Heart left ventricle (tissue), 16 donors: ENCODE measurements at regions of chr2 and their contacts with region 1.

Region 1: GRCh38 chr2:101697124-101698013 is at the start of gene MAP4K4:
- DNase-seq: peak; percentile 89 to 93 (median 90)
- ATAC-seq: peak; percentile 85 to 91 (median 86)
- H3K4me3 ChIP-seq: peak within 1 kb of the TSS; percentile 62 to 88 (median 72)
- H3K27ac ChIP-seq: peak within 1 kb of the TSS; percentile 64 to 95 (median 92)
- H3K4me1 ChIP-seq: peaks cover 0 to 42% (median 25%) of the 10 kb centered on the region in 12 donors
- H3K27me3 ChIP-seq: no peaks in the 10 kb centered on the region
- CTCF ChIP-seq: peak in 11 of 12 donors; percentile 15 to 63 (median 38)
- POLR2A ChIP-seq: peak in 1 of 2 donors; percentile 54
- total RNA-seq, gene MAP4K4: 65.3 to 146 (median 114) TPM

Region 2: DNA sequence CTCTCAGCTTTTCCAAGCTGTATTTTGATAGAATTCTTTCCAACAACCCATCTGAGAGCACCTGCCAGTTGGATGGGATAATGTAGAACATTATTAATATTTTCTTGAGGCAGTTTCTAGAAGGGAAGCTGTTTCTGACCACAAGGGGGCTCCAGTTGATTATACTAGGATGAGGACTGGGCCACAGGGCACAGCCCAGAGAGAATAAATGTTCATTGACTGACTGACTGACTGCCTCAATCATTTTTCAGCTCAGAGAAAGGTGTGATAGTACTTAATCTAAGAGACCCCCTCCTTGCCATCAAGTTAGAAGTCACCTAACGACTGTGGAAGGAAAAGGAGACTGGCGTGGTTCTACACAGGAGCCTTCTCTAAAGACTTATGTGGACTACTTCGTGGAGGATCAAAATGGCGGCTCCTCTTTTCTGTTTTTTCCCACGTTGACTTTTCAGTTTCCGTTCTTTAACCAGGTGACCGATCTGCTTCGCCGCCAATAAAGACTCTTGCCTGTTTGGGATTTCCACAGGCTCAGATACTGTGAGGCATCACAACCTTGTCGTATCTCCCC is 278.2 kb before region 1 on chr2:
- intact Hi-C with region 1: loop called in 4 of 10 experiments (anchors 5 to 10 kb)
- DNase-seq: peak in 4 of 5 donors; percentile 47 to 68 (median 62)
- ATAC-seq: peak; percentile 55 to 89 (median 76)
- H3K4me3 ChIP-seq: no peak overlapping the region
- H3K27ac ChIP-seq: no peak overlapping the region
- H3K4me1 ChIP-seq: peaks cover 0 to 4% (median 0%) of the 10 kb centered on the region in 12 donors
- H3K27me3 ChIP-seq: no peaks in the 10 kb centered on the region
- CTCF ChIP-seq: peak; percentile 66 to 90 (median 83)
- POLR2A ChIP-seq: no peak

Region 3: DNA sequence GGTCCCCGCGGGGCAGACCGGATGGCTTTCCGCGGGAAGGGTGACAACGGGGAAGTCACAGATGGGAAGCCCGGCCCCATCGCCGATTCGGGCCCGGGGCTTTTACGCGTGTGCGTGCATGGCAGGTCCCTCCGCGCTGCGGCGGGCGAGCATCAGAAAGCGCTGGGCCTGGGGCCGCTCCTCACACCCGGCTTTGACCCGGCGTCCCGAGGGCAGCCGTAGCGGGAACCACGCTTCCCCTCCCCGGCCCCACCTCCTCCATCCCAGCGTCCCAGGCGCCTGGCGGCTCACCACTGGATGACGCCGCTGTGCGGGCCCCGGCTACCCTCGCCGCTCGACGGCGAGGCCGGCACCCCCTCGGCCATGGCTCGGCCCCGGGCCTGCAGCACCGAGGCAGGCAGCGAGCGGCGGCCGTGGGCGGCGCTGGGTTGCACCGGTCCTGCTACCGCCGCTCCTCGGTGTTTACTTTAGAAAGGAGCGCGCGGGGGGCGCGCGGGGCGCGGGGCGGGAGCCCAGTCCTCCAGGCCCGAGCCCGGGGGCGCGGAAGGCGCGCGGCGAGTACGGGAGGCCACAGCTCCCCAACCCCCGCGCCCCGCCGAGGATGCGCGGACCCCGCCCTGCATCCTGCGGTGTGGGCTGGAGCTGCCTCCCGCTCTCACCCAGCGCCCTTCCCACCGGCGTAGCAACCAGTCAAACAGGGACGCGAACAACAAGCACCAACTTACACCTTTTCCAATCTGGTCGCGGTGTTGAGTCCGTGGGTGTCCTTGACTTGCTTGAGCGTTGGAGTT is 223.3 kb before region 1 on chr2:
- intact Hi-C with region 1: loop called in 1 of 10 experiments (anchors 10 kb)
- DNase-seq: peak; percentile 62 to 85 (median 74)
- ATAC-seq: peak; percentile 71 to 93 (median 90)
- H3K4me3 ChIP-seq: peak overlapping the region; percentile 32 to 87 (median 62)
- H3K27ac ChIP-seq: peak overlapping the region; percentile 52 to 92 (median 78)
- H3K4me1 ChIP-seq: peaks cover 0 to 34% (median 9%) of the 10 kb centered on the region in 12 donors
- H3K27me3 ChIP-seq: peaks cover 0 to 64% (median 0%) of the 10 kb centered on the region in 9 donors
- CTCF ChIP-seq: peak in 2 of 12 donors; percentile 10 to 13
- POLR2A ChIP-seq: no peak

Region 4: GRCh38 chr2:101741775-101742520 is 44.6 kb after region 1 on chr2:
- intact Hi-C with region 1: loop called in 3 of 10 experiments (anchors 5 kb)
- DNase-seq: no peak
- ATAC-seq: peak in 3 of 4 donors; percentile 8 to 32 (median 28)
- H3K4me3 ChIP-seq: no peak overlapping the region
- H3K27ac ChIP-seq: peak overlapping the region in 11 of 12 donors; percentile 33 to 74 (median 62)
- H3K4me1 ChIP-seq: peaks cover 15 to 92% (median 75%) of the 10 kb centered on the region in 12 donors
- H3K27me3 ChIP-seq: no peaks in the 10 kb centered on the region
- CTCF ChIP-seq: no peak
- POLR2A ChIP-seq: no peak

Region 5: GRCh38 chr2:101770726-101771125 is 73.4 kb after region 1 on chr2:
- intact Hi-C with region 1: loop called in 3 of 10 experiments (anchors 5 to 10 kb)
- DNase-seq: no peak
- ATAC-seq: peak; percentile 11 to 44 (median 40)
- H3K4me3 ChIP-seq: no peak overlapping the region
- H3K27ac ChIP-seq: peak overlapping the region in 5 of 12 donors; percentile 2 to 14 (median 4)
- H3K4me1 ChIP-seq: peaks cover 8 to 100% (median 88%) of the 10 kb centered on the region in 12 donors
- H3K27me3 ChIP-seq: no peaks in the 10 kb centered on the region
- CTCF ChIP-seq: peak in 9 of 12 donors; percentile 33 to 55 (median 39)
- POLR2A ChIP-seq: no peak

Region 6: GRCh38 chr2:101831351-101831865 is 134.0 kb after region 1 on chr2:
- intact Hi-C with region 1: loop called in 8 of 10 experiments (anchors 1 to 5 kb)
- DNase-seq: peak in 4 of 5 donors; percentile 72 to 79 (median 76)
- ATAC-seq: peak; percentile 70 to 84 (median 80)
- H3K4me3 ChIP-seq: no peak overlapping the region
- H3K27ac ChIP-seq: peak overlapping the region in 10 of 12 donors; percentile 40 to 76 (median 56)
- H3K4me1 ChIP-seq: peaks cover 9 to 58% (median 53%) of the 10 kb centered on the region in 12 donors
- H3K27me3 ChIP-seq: no peaks in the 10 kb centered on the region
- CTCF ChIP-seq: peak; percentile 64 to 87 (median 78)
- POLR2A ChIP-seq: no peak

Region 7: DNA sequence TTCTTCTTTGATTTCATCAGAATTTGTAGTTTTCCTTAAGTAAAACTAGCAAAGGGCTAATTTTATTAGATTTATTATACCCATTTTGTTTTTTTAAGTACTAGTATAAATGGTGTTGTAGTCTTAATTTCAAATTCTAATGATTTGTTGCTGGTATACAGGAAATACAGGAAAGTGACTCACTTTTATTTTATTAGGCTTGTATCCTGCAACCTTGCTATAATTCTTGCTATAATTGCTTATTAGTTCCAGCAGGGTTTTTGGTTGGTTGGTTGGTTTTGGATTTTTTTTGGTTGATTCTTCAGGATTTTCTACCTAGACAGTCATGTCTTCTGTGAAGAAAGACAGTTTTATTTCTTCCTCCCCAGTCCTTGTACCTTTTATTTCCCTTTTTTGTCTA is 183.8 kb after region 1 on chr2:
- intact Hi-C with region 1: no loop called
- DNase-seq: no peak
- ATAC-seq: no peak
- H3K4me3 ChIP-seq: no peak overlapping the region
- H3K27ac ChIP-seq: no peak overlapping the region
- H3K4me1 ChIP-seq: peaks cover 0 to 35% (median 17%) of the 10 kb centered on the region in 12 donors
- H3K27me3 ChIP-seq: no peaks in the 10 kb centered on the region
- CTCF ChIP-seq: no peak
- POLR2A ChIP-seq: no peak

Region 8: DNA sequence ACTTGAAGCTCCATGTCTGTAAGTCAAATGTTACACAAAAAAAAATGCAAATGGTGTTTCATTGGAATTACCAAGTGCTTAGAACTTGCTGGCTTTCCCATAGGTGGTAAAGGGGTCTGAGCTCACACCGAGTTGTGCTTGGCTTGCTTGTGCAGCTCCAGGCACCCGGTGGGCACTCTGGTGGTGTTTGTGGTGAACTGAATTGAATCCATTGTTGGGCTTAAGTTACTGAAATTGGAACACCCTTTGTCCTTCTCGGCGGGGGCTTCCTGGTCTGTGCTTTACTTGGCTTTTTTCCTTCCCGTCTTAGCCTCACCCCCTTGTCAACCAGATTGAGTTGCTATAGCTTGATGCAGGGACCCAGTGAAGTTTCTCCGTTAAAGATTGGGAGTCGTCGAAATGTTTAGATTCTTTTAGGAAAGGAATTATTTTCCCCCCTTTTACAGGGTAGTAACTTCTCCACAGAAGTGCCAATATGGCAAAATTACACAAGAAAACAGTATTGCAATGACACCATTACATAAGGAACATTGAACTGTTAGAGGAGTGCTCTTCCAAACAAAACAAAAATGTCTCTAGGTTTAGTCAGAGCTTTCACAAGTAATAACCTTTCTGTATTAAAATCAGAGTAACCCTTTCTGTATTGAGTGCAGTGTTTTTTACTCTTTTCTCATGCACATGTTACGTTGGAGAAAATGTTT is 196.5 kb after region 1 on chr2:
- intact Hi-C with region 1: no loop called
- DNase-seq: no peak
- ATAC-seq: no peak
- H3K4me3 ChIP-seq: no peak overlapping the region
- H3K27ac ChIP-seq: no peak overlapping the region
- H3K4me1 ChIP-seq: peaks cover 0 to 13% (median 0%) of the 10 kb centered on the region in 12 donors
- H3K27me3 ChIP-seq: no peaks in the 10 kb centered on the region
- CTCF ChIP-seq: no peak
- POLR2A ChIP-seq: no peak

Region 9: DNA sequence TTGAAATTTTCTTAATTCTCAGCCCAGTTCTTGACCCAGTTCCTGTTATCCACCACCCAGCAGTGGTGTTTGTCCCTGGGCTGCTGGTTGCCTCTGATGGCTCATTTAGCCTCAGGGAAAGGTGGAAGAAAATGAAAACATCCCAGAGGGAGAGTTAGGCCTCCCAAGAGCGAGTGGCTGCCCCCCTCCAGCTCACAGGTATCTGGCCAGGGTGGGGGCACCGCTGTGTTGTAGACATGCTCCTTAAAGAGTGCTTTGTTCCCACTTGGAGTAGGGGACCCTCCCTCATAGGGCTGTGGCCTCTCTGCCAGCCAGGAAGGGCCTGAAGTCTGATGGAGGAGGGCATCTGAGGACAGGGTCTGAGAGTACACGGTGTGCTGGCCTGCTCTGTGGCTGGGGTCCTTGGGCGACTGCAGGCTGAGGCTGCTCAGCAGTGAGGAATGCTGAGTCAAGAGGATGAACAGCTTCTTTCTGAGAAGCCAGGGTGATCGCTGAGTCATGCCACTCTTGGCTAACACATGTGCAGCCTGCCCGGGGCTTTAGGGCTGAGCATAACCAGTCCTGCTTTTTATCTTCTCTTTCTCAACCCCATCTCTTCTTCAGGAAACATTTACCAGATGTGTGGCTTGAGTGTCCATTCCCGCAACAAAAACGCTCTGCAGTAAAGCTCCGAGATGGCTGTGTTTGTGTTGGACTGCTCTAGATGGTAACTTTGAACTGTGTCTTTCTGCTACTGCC is 366.7 kb after region 1 on chr2:
- intact Hi-C with region 1: no loop called
- DNase-seq: peak; percentile 80 to 95 (median 87)
- ATAC-seq: peak; percentile 85 to 94 (median 92)
- H3K4me3 ChIP-seq: peak overlapping the region in 3 of 12 donors; percentile 11 to 12 (median 11)
- H3K27ac ChIP-seq: peak overlapping the region; percentile 77 to 97 (median 90)
- H3K4me1 ChIP-seq: peaks cover 0 to 79% (median 52%) of the 10 kb centered on the region in 12 donors
- H3K27me3 ChIP-seq: no peaks in the 10 kb centered on the region
- CTCF ChIP-seq: no peak
- POLR2A ChIP-seq: no peak

Region 10: DNA sequence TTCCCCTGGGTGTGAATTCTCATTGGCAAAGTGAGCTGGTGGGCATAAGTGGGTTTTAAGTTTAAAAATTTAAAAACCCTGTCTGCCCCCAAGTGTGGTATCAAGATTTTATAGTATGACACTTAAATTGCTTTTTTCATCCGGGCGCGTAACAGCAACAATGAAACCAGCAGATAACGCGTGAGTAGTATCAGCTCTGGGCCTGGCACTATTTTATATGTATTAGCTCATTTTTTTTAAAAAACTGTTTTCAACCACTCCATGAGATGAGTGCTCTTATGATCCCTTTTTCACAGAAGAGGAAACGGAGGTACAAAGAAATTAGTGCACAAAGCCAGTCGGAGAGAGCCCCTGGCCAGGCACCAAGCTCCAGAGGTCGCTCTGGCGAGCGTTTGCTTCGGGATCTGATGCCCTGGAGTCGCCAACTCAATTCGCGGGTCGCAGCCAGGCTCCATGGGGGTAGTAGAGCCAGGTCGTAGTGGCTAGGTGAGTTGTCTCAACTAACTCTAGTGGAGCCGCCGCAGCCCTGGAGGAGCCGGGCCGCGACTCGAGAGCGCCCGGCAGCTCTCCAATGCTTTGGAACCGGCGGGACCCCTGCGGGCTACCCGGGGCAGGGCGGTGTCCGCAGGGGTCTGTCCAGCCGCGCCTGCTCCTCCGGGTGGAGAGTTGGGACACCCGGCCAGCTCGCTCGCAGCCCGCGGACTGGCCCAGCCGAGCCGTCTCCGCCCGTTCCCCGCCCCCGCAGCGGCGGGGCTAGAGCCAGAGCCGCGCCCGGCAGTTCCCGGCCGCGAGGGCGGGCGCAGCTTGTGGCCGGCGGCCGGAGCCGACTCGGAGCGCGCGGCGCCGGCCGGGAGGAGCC is 444.8 kb after region 1 on chr2 and contains the start of gene IL1R1:
- intact Hi-C with region 1: no loop called
- DNase-seq: peak; percentile 87 to 92 (median 89)
- ATAC-seq: peak; percentile 80 to 96 (median 92)
- H3K4me3 ChIP-seq: peak within 1 kb of the TSS; percentile 52 to 90 (median 76)
- H3K27ac ChIP-seq: peak within 1 kb of the TSS; percentile 82 to 96 (median 92)
- H3K4me1 ChIP-seq: peaks cover 0 to 41% (median 14%) of the 10 kb centered on the region in 12 donors
- H3K27me3 ChIP-seq: no peaks in the 10 kb centered on the region
- CTCF ChIP-seq: peak in 3 of 12 donors; percentile 2 to 22 (median 11)
- POLR2A ChIP-seq: peak in 1 of 2 donors; percentile 78
- total RNA-seq, gene IL1R1: 10.9 to 49.0 (median 19.6) TPM